ENCODE measurements at regions of chr3 and their contacts with region 1.

Region 1: DNA sequence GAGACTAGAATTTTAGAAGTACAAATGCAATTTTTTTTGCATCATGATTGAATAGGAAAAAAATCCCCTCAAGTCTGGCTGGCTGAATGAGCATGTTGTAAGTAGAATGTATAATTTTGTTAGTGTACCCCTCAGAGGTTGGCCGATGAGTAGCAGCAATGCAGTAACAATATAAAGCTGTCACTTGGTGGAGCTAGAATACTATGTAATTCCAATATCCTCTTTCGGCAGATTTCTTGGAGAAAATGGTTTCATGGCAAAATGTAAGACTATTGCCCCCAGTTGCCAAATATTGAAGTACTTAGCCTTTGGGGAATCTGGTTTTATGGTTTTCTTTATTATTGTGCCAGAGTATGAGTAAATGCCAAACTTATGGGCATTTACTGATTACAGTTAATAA is 39.8 kb upstream of the SGO1 start:
- DNase-seq: peak; percentile 81
- H3K4me3 ChIP-seq: no peak overlapping the region
- H3K27ac ChIP-seq: no peak overlapping the region
- H3K4me1 ChIP-seq: no peaks in the 10 kb centered on the region
- H3K27me3 ChIP-seq: no peaks in the 10 kb centered on the region
- CTCF ChIP-seq: peak; percentile 35 to 48
- POLR2A ChIP-seq: no peak

Region 2: GRCh38 chr3:19822805-19823204 is 403.0 kb before region 1 on chr3:
- CTCF ChIA-PET with region 1: no interaction called
- POLR2A ChIA-PET with region 1: no interaction called
- dilution Hi-C with region 1: no loop called
- intact Hi-C with region 1: no loop called
- DNase-seq: no peak
- H3K4me3 ChIP-seq: no peak overlapping the region
- H3K27ac ChIP-seq: no peak overlapping the region
- H3K4me1 ChIP-seq: no peaks in the 10 kb centered on the region
- H3K27me3 ChIP-seq: no peaks in the 10 kb centered on the region
- CTCF ChIP-seq: no peak
- POLR2A ChIP-seq: no peak

Region 3: DNA sequence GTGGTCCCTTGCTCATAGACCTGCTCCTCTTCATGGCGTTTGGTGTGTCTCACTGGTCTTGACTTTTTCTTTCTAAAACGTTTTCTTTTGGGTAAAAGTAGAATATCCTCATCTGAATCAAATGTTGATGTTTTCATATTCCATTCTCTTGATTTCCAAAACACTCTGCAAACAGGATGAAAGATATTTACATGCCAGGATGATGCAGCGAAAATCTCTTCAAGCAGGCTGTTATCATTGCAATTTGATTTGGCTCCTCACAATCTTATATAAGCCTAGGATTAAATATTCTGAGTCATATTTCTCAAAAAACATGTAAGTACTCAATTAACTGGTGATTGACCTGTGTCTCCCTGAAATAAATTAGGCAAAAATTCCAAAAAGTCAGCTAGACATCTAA is 223.8 kb before region 1 on chr3:
- CTCF ChIA-PET with region 1: no interaction called
- POLR2A ChIA-PET with region 1: no interaction called
- dilution Hi-C with region 1: no loop called
- intact Hi-C with region 1: no loop called
- DNase-seq: no peak
- H3K4me3 ChIP-seq: no peak overlapping the region
- H3K27ac ChIP-seq: no peak overlapping the region
- H3K4me1 ChIP-seq: no peaks in the 10 kb centered on the region
- H3K27me3 ChIP-seq: no peaks in the 10 kb centered on the region
- CTCF ChIP-seq: no peak
- POLR2A ChIP-seq: no peak

Region 4: DNA sequence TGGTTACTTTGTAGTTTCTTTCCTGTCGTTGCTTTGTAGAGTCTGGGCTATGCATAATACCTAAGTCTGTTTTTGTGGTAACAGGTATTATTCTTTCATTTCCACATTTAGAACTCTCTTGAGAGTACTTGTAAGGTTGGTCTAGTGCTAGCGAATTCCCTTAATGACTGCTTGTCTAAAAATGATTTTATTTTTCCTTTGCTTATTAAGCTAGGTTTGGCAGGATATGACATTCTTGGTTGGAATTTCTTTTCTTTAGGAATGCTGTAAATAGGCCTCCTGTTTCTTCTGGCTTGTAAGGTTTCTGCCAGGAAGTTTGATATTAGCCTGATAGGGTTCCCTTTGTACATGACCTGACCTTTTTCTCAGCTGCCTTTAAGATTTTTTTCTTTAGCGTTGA is 30.4 kb after region 1 on chr3:
- CTCF ChIA-PET with region 1: interaction called, 8 read pairs
- POLR2A ChIA-PET with region 1: no interaction called
- dilution Hi-C with region 1: no loop called
- intact Hi-C with region 1: loop called (anchors 1 kb)
- DNase-seq: peak; percentile 92
- H3K4me3 ChIP-seq: peak overlapping the region in 1 of 3 experiments; percentile 11
- H3K27ac ChIP-seq: peak overlapping the region; percentile 83
- H3K4me1 ChIP-seq: peaks cover 18% of the 10 kb centered on the region
- H3K27me3 ChIP-seq: no peaks in the 10 kb centered on the region
- CTCF ChIP-seq: no peak
- POLR2A ChIP-seq: no peak

Region 5: DNA sequence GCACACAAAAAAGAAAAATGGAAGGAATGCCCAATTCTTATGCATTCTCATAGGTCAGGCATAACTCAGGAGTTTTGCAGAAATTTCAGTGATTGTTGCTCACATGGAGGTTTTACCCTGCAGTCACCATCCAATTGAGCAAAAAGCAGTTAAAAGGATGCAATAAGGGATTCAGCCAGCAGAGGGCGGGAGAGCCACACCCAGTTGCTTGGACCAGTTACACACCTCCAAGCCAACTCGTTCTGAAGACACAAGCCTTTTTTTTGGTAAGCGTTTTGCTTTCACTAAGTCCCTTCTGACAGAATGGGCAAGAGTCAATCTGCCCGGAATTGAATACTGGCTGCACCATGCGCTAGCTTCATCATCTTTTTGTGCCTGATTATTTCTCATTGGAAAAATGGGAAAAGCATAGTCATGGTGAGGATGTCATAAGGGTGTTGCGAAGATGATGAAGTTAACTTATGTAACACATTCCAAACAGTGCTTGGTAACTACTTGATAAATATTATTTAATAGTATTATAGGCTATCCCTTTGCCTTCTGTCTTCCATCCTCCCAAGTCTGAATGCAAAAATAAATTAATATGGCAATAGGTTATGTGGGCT is 114.7 kb after region 1 on chr3:
- CTCF ChIA-PET with region 1: interaction called, 9 read pairs
- POLR2A ChIA-PET with region 1: no interaction called
- dilution Hi-C with region 1: no loop called
- intact Hi-C with region 1: loop called (anchors 1 kb)
- DNase-seq: peak; percentile 84
- H3K4me3 ChIP-seq: no peak overlapping the region
- H3K27ac ChIP-seq: no peak overlapping the region
- H3K4me1 ChIP-seq: no peaks in the 10 kb centered on the region
- H3K27me3 ChIP-seq: no peaks in the 10 kb centered on the region
- CTCF ChIP-seq: peak; percentile 78 to 94
- POLR2A ChIP-seq: no peak

Region 6: DNA sequence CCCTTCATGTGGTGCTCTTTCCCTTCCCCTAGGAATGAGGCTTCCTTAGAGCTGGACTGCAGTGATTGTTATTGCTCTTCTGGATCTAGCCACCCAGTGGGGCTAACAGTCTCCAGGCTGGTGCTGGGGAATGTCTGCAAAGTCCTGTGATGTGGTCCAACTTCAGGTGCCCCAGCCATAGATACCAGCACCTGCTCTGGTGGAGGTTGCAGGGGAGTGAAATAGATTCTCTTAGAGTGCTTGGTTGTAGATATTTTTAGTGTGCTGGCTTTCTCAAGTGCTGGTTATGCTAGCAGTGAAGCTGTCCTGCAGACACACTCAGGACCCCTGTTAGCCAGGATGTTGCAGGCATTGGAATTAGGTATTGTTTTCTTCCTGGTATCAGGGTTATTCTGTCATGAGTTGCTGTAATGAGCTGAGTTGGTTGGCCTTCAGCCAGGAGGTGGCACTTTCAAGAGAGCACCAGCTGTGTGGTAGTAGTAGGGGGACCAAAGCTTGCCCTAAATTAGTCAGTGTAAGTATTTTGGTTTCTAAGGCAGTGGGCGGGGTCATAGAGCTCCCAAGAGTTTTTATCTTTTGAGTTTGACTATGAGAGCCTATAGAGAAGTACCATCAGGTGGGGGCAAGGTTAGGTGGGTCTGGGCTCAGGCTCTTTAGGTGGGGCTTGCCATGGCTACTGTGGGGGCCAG is 277.8 kb after region 1 on chr3:
- CTCF ChIA-PET with region 1: no interaction called
- POLR2A ChIA-PET with region 1: no interaction called
- dilution Hi-C with region 1: no loop called
- intact Hi-C with region 1: no loop called
- DNase-seq: no peak
- H3K4me3 ChIP-seq: no peak overlapping the region
- H3K27ac ChIP-seq: no peak overlapping the region
- H3K4me1 ChIP-seq: no peaks in the 10 kb centered on the region
- H3K27me3 ChIP-seq: no peaks in the 10 kb centered on the region
- CTCF ChIP-seq: no peak
- POLR2A ChIP-seq: no peak

Region 7: GRCh38 chr3:20668411-20668810 is 442.6 kb after region 1 on chr3:
- CTCF ChIA-PET with region 1: interaction called, 4 read pairs
- POLR2A ChIA-PET with region 1: no interaction called
- dilution Hi-C with region 1: no loop called
- intact Hi-C with region 1: loop called (anchors 10 kb)
- DNase-seq: peak; percentile 45
- H3K4me3 ChIP-seq: no peak overlapping the region
- H3K27ac ChIP-seq: no peak overlapping the region
- H3K4me1 ChIP-seq: no peaks in the 10 kb centered on the region
- H3K27me3 ChIP-seq: no peaks in the 10 kb centered on the region
- CTCF ChIP-seq: peak in 1 of 2 donors; percentile 26
- POLR2A ChIP-seq: no peak

Region 8: DNA sequence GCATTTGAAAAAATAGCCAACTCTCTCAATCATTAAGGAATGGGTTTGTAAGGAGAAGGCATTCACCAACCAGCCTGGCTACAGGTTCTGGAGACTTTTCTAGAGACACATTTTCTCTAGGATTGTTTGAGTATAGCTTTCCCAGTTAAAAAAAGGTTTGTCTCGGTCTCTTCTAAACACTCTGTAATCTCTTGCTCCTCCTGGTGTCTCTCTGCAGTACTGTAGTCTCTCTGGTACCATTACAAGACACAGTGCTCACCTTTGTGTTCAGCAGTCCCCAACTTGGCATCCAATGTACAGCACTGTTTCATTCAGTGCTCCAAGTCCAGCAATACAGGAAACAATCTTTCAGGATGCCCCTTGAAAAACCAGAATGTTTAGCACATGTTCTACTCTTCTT is 990.8 kb after region 1 on chr3:
- CTCF ChIA-PET with region 1: interaction called, 5 read pairs
- POLR2A ChIA-PET with region 1: no interaction called
- dilution Hi-C with region 1: no loop called
- intact Hi-C with region 1: loop called (anchors 5 kb)
- DNase-seq: no peak
- H3K4me3 ChIP-seq: no peak overlapping the region
- H3K27ac ChIP-seq: no peak overlapping the region
- H3K4me1 ChIP-seq: no peaks in the 10 kb centered on the region
- H3K27me3 ChIP-seq: no peaks in the 10 kb centered on the region
- CTCF ChIP-seq: no peak
- POLR2A ChIP-seq: no peak

Region 9: DNA sequence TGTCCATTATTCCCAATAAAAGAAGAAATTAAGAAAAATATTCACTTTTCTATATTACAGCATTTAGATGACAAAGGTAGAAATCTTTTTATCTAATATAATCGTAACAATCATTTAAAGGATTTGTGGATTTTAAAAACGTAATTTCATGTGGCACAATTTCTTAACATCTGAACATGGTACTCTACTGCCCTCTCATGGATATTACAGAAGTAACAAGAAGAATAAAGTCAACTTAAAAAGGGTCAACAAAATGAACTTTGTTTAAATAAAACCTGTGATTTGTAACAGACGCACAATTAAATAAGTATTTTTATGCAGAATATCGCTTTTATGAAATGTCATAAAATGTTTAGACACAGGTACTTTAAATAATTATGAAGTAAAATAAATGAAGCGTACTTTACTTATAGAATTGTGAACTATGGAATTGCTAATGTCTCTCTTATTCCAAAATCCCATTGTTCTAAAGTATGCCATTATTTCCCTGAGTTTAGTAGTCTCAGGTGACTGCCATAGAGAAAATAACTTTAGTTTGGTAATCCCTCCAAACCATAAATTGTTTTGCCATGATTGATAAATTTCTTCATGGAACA is 1892.1 kb after region 1 on chr3:
- CTCF ChIA-PET with region 1: interaction called, 20 read pairs
- POLR2A ChIA-PET with region 1: no interaction called
- dilution Hi-C with region 1: no loop called
- intact Hi-C with region 1: loop called (anchors 2 kb)
- DNase-seq: peak; percentile 54
- H3K4me3 ChIP-seq: no peak overlapping the region
- H3K27ac ChIP-seq: no peak overlapping the region
- H3K4me1 ChIP-seq: peaks cover 5% of the 10 kb centered on the region
- H3K27me3 ChIP-seq: no peaks in the 10 kb centered on the region
- CTCF ChIP-seq: peak in 1 of 2 donors; percentile 21
- POLR2A ChIP-seq: no peak